ENCODE measurements at regions of chrX and their contacts with region 1.

Region 1: GRCh38 chrX:96006281-96006680 is 678.4 kb upstream of the DIAPH2 start:
- DNase-seq: no peak
- H3K4me3 ChIP-seq: no peak overlapping the region
- H3K27ac ChIP-seq: no peak overlapping the region
- H3K4me1 ChIP-seq: no peaks in the 10 kb centered on the region
- H3K27me3 ChIP-seq: no peaks in the 10 kb centered on the region
- CTCF ChIP-seq: no peak
- EP300 ChIP-seq: no peak
- POLR2A ChIP-seq: no peak

Region 2: GRCh38 chrX:95949628-95950027 is 56.7 kb before region 1 on chrX:
- in situ Hi-C with region 1: no loop called
- intact Hi-C with region 1: loop called (anchors 5 kb)
- DNase-seq: no peak
- H3K4me3 ChIP-seq: no peak overlapping the region
- H3K27ac ChIP-seq: no peak overlapping the region
- H3K4me1 ChIP-seq: no peaks in the 10 kb centered on the region
- H3K27me3 ChIP-seq: no peaks in the 10 kb centered on the region
- CTCF ChIP-seq: no peak
- EP300 ChIP-seq: no peak
- POLR2A ChIP-seq: no peak